ENCODE measurements at regions of chr7 and their contacts with region 1.

Region 1: GRCh38 chr7:152759949-152760853 is 649 bp downstream of the ACTR3B start:
- DNase-seq: peak in 10 of 14 experiments; percentile 1 to 50 (median 7)
- ATAC-seq: peak; percentile 23
- H3K4me3 ChIP-seq: peak overlapping the region; percentile 74
- H3K4me3 Mint-ChIP-seq: peak overlapping the region; percentile 92
- H3K27ac ChIP-seq: peak overlapping the region in 1 of 2 donors; percentile 70
- H3K27ac Mint-ChIP-seq: peak overlapping the region; percentile 78
- H3K4me1 ChIP-seq: peaks cover 16% of the 10 kb centered on the region
- H3K4me1 Mint-ChIP-seq: peaks cover 21% of the 10 kb centered on the region
- H3K27me3 ChIP-seq: no peaks in the 10 kb centered on the region
- H3K27me3 Mint-ChIP-seq: no peaks in the 10 kb centered on the region
- CTCF ChIP-seq: no peak

Region 2: GRCh38 chr7:152025077-152025936 is 734.9 kb before region 1 on chr7 and contains the start of gene GALNT11:
- CTCF ChIA-PET with region 1: no interaction called
- POLR2A ChIA-PET with region 1: no interaction called
- intact Hi-C with region 1: loop called in 1 of 2 experiments (anchors 2 kb)
- DNase-seq: peak; percentile 72 to 96 (median 82)
- ATAC-seq: peak; percentile 92
- H3K4me3 ChIP-seq: peak within 1 kb of the TSS; percentile 96
- H3K4me3 Mint-ChIP-seq: peak within 1 kb of the TSS; percentile 96
- H3K27ac ChIP-seq: peak within 1 kb of the TSS in 1 of 2 donors; percentile 82
- H3K27ac Mint-ChIP-seq: peak within 1 kb of the TSS; percentile 96
- H3K4me1 ChIP-seq: peaks cover 30% of the 10 kb centered on the region
- H3K4me1 Mint-ChIP-seq: peaks cover 42% of the 10 kb centered on the region
- H3K27me3 ChIP-seq: no peaks in the 10 kb centered on the region
- H3K27me3 Mint-ChIP-seq: no peaks in the 10 kb centered on the region
- CTCF ChIP-seq: no peak
- total RNA-seq, gene GALNT11: 20.7 to 22.2 TPM

Region 3: GRCh38 chr7:152366662-152367061 is 393.5 kb before region 1 on chr7:
- CTCF ChIA-PET with region 1: no interaction called
- POLR2A ChIA-PET with region 1: no interaction called
- intact Hi-C with region 1: no loop called
- DNase-seq: peak in 1 of 14 experiments; percentile 18
- ATAC-seq: no peak
- H3K4me3 ChIP-seq: no peak overlapping the region
- H3K4me3 Mint-ChIP-seq: peak overlapping the region; percentile 31
- H3K27ac ChIP-seq: no peak overlapping the region
- H3K27ac Mint-ChIP-seq: no peak overlapping the region
- H3K4me1 ChIP-seq: peaks cover 18% of the 10 kb centered on the region
- H3K4me1 Mint-ChIP-seq: peaks cover 79% of the 10 kb centered on the region
- H3K27me3 ChIP-seq: no peaks in the 10 kb centered on the region
- H3K27me3 Mint-ChIP-seq: no peaks in the 10 kb centered on the region
- CTCF ChIP-seq: no peak

Region 4: GRCh38 chr7:152411389-152411788 is 348.8 kb before region 1 on chr7:
- CTCF ChIA-PET with region 1: no interaction called
- POLR2A ChIA-PET with region 1: no interaction called
- intact Hi-C with region 1: no loop called
- DNase-seq: no peak
- ATAC-seq: no peak
- H3K4me3 ChIP-seq: no peak overlapping the region
- H3K4me3 Mint-ChIP-seq: no peak overlapping the region
- H3K27ac ChIP-seq: no peak overlapping the region
- H3K27ac Mint-ChIP-seq: no peak overlapping the region
- H3K4me1 ChIP-seq: no peaks in the 10 kb centered on the region
- H3K4me1 Mint-ChIP-seq: peaks cover 37% of the 10 kb centered on the region
- H3K27me3 ChIP-seq: no peaks in the 10 kb centered on the region
- H3K27me3 Mint-ChIP-seq: no peaks in the 10 kb centered on the region
- CTCF ChIP-seq: no peak